Ascending aorta (tissue), 2 donors: ENCODE measurements at regions of chr10 and their contacts with region 1.

Region 1: DNA sequence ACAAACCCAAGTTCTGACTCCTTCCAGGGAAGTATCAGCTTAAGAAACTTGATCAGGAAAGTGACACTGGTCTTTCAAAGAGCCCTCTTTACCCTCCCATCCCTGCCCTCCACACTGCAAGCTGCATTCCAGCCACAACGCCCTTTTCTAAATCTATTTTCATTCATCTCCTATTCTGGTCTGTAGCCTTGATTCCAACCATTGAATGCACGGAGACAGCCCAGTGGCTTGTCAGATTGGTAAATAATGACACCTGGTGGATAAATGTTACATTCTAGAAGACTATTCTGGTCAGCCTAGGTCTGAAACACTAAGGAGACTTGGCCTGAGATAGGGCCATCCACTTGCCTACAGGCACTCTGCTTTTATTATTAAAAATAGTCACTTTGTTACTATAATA is 20.9 kb downstream of the MORN4 start:
- DNase-seq: no peak
- H3K4me3 ChIP-seq: no peak overlapping the region
- H3K27ac ChIP-seq: peak overlapping the region in 1 of 2 donors; percentile 44
- H3K4me1 ChIP-seq: peaks cover 0 to 24% of the 10 kb centered on the region in 2 donors
- H3K27me3 ChIP-seq: no peaks in the 10 kb centered on the region
- CTCF ChIP-seq: peak; percentile 41 to 75 (median 62)

Region 2: DNA sequence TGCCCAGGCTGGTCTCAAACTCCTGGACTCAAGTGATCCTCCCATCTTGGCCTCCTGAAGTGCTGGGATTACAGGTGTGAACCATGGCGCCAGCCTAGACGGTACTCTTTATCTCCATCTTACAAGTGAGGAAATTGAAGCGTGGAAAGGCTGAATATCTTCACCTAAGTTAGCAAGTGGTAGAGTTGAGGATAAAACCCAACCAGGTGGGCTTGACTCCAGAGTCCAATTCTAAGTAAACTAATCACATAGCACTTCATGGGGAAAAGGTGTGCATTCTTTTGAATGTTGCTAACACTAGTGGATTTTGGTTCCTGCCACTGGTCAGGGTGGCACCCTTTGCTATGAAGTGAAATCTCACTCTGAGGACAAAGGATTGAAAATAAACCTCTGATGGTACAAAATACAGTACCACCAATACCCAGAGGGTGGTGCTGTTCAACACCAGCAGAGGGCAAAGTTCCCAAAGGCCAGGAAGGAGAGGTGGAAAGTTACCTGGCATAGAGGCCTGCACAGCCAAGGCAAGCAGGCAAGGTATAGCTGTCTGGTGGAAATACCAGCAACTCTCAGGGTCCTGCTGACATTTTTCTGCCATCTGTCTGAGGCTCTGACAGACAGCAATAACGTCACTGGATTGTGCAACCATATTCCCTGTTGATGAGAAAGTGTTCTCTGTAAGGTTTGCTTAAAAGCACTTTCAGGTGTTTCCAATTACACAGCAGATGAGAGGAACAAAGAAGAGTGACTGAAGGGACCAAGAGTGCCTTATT is 148.8 kb before region 1 on chr10:
- intact Hi-C with region 1: loop called (anchors 2 kb)
- DNase-seq: no peak
- H3K4me3 ChIP-seq: no peak overlapping the region
- H3K27ac ChIP-seq: peak overlapping the region; percentile 34 to 49
- H3K4me1 ChIP-seq: no peaks in the 10 kb centered on the region
- H3K27me3 ChIP-seq: no peaks in the 10 kb centered on the region
- CTCF ChIP-seq: peak; percentile 74 to 85 (median 78)